AG04449 (cell line): ENCODE measurements at regions of chr4 and their contacts with region 1.

Region 1: DNA sequence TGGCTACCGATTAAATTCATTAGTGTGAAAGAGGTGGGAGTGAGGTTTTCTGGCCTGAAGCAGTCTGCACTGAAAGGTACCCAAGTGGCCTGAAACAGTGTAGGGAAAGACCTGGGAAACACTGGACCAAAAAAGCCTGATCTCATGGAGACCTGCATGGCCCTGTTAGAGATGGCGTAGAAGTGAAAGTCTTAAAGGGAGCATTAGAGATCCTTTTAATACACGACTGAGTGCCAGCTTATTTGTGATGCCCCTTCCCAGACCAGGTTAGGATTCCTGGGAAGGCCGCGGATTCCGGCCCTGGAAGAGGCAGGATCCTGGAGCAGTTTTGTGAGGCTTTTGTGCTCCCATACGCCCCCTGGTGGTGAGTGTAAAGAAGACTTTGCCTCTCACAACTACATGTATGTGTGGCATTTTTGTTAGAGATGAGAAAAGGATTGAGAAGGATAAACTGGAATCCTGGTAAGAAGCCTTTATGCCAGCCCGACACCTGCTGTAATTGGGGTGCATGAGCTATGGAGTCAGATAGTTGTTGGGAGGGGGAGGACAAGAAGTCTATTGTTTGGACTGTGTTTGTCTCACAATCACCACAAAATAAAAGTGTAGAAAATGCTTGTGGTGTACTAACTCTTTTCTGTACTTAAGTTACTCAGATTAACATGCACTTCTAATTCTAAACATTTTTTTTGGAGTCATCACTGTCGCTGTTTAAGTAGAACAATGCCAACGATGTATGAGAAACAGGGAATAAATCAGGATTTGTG is 54.0 kb downstream of the JADE1 start:
- DNase-seq: no peak
- H3K4me3 ChIP-seq: no peak overlapping the region
- CTCF ChIP-seq: peak; percentile 77

Region 2: DNA sequence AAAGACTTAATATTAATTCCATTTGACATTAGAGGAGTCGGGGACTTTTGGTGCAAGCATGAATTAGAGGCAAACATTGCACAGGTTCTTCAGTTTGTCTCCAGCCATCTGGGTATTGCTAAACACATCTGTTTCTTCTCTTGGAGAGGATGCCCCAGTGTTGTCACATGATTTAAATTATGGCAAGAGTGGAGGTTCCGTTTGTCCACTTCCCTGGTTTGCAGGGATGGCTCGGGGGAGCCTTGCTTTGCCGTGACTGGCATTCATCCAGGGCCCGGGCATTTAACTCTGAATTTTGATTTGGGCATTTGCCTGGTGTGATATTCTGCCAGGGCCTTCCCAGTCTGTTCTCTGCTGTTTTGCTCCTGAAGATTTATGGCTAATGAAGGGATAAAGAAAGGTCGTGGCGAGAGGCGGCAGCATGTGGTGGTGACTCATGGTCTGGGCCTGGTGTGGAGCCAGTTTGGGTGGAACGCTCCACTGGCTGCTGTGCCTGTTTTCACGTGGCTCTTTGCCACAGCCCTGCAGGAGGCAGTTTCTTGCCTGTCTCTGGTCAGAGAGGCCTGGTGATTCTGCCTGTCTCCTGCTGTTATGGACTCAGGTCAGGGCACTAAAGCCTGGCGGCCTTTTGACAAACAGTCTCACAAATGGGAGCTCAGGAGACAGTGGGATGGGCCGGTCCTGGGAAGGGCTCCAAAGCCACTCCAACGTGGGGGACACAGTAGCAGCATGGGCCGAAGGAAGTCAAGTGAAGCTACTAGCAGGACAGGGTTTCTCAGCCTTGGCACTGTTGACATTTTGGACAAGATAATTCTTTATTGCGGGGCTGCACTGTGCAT is 476.5 kb before region 1 on chr4:
- CTCF ChIA-PET with region 1: interaction called, 24 read pairs
- POLR2A ChIA-PET with region 1: no interaction called
- DNase-seq: peak; percentile 91
- H3K4me3 ChIP-seq: no peak overlapping the region; the same call in 1 of the 2 replicates
- CTCF ChIP-seq: peak; percentile 9

Region 3: DNA sequence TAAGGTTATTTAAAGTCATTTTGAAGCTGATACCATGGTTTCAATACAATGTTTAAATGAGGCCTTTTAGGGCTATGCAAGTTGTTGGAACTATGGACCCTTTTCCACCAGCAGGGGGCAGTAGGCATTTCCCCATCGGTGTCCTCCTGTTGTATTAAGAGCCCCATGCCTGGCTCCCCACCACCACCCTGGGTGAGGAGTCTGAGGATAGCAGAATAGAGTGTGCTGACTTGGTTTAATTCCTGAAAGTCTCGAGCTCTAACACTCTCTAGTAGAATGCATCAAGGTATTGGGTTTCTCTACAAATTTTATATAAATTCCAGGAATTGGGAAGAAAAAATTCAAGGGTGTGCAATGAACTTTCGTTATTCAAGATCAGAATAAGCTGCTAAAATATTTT is 288.8 kb before region 1 on chr4:
- CTCF ChIA-PET with region 1: interaction called, 16 read pairs
- POLR2A ChIA-PET with region 1: no interaction called
- DNase-seq: peak; percentile 34
- H3K4me3 ChIP-seq: no peak overlapping the region
- CTCF ChIP-seq: peak; percentile 42

Region 4: GRCh38 chr4:128776794-128777216 is 86.7 kb before region 1 on chr4:
- CTCF ChIA-PET with region 1: no interaction called
- POLR2A ChIA-PET with region 1: no interaction called
- DNase-seq: peak; percentile 85
- H3K4me3 ChIP-seq: no peak overlapping the region
- CTCF ChIP-seq: no peak

Region 5: DNA sequence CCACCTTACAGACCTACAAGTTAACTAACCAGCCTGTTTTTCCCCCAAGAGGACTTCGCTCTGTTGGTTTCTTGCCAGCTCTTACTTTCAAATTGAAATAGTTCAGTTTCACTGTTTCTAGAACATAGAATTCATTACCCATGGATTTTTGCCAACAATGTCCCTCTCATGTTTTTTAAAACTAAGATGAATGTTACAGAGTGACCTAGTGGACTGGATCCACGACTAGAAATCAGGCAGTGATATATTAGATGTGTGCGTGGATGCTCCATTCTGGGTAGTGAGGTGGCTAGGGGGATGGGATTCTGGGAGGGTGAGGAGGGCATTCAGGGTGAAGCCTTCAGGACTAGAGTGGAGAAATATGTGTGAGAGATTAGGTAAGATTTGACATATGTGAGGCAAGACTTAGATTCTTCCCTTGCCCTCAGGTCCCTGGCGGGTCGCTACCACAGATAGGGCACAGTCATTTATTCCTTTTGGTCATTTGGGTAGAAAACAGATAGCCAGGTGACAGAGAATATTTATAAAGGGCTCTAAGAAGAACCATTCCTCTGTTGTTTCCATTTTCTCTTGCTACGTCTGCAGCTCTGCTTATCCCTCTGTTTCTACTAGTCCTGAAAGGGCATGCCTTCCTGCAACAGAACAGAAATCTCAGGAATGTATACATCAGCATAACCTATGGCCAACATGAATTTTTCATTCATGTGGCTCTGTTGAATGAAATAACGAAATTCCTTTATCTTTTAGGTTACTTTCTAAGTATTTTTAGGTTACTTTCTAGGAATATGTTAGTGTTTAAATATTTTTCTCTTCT is 69.4 kb before region 1 on chr4:
- CTCF ChIA-PET with region 1: no interaction called
- POLR2A ChIA-PET with region 1: no interaction called
- DNase-seq: no peak
- H3K4me3 ChIP-seq: no peak overlapping the region
- CTCF ChIP-seq: no peak

Region 6: GRCh38 chr4:128823025-128823661 is 40.4 kb before region 1 on chr4:
- CTCF ChIA-PET with region 1: interaction called, 14 read pairs
- POLR2A ChIA-PET with region 1: interaction called, 8 read pairs
- DNase-seq: peak; percentile 95
- H3K4me3 ChIP-seq: no peak overlapping the region
- CTCF ChIP-seq: no peak

Region 7: DNA sequence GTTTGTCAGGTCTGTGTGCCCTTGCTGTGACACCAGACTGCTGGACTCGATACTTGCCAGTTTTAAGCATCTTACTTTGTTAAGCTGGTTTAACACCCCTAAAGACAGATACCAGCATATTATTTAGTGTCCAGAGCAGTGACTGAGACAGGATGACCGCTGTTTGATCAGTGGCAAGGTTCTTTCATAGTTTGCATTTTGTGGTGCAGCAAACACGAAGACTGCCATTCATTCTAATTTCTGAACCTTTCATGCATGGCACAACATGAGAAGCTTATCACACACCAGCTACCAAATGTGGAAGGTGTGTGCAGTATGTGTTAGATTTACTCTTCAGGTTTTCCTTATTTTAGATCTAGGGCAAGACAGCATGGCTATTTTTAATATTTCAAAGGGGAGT is 25.8 kb before region 1 on chr4:
- CTCF ChIA-PET with region 1: interaction called, 13 read pairs
- POLR2A ChIA-PET with region 1: no interaction called
- DNase-seq: no peak
- H3K4me3 ChIP-seq: no peak overlapping the region
- CTCF ChIP-seq: no peak

Region 8: GRCh38 chr4:128880662-128881061 is 17.2 kb after region 1 on chr4:
- CTCF ChIA-PET with region 1: interaction called, 13 read pairs
- POLR2A ChIA-PET with region 1: no interaction called
- DNase-seq: no peak
- H3K4me3 ChIP-seq: no peak overlapping the region
- CTCF ChIP-seq: no peak